ENCODE measurements at regions of chr14 and their contacts with region 1.

Region 1: DNA sequence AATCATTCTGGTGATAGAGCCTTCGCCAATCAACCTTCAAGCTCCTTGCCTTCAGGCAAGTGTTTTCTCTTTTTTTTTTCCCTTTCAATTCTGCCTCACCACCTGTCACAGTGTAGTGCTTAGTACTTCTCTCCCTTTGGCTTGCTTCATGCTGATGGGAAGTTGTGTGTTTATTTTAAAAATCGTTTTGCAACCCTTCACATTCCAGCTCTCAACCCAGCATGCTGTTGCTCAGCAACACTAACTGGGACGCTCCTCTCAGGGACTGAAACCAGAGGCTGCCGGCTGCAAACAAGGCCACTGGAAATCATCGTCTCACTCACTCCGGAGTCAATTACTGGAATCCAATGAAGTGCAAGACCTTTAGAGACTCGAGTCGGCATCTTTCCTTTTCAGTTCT is 342.7 kb downstream of the PRKD1 start:
- DNase-seq: peak; percentile 70
- H3K4me3 ChIP-seq: no peak overlapping the region
- CTCF ChIP-seq: no peak

Region 2: DNA sequence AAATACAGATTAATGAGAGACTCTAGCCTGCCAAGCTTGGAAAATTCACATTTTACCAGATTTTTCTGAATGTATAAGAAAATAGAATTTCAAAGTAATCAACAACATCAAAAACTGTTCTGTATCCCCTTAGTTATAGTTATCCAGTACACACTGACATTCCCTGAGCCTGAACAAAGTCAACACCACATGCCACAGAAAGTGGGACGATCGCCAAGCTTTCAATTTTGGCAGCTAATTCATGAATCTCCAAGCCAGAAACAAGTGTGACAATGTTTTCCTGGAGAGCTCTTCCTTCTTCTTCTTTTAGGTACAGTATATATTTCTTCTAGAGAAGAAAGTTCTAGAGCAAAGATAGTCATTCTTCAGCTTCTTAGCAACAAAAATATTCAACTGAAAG is 52.4 kb after region 1 on chr14:
- in situ Hi-C with region 1: loop called (anchors 5 kb)
- DNase-seq: peak; percentile 91
- H3K4me3 ChIP-seq: no peak overlapping the region
- CTCF ChIP-seq: no peak

Region 3: GRCh38 chr14:29836395-29836794 is 251.4 kb after region 1 on chr14:
- in situ Hi-C with region 1: no loop called
- DNase-seq: no peak
- H3K4me3 ChIP-seq: no peak overlapping the region
- CTCF ChIP-seq: no peak

Measured in astrocyte of the cerebellum (primary cell).